ENCODE measurements at regions of chr5 and their contacts with region 1.

Region 1: GRCh38 chr5:176700239-176700847 is 53.1 kb downstream of the TSPAN17 start:
- DNase-seq: peak; percentile 47 to 79
- H3K4me3 ChIP-seq: peak overlapping the region in 1 of 4 experiments; percentile 18; a peak in 1 of 8 replicates
- H3K27ac ChIP-seq: no peak overlapping the region
- H3K4me1 ChIP-seq: peaks cover 13 to 36% (median 25%) of the 10 kb centered on the region in 4 experiments
- H3K27me3 ChIP-seq: no peaks in the 10 kb centered on the region; a peak in 1 of 7 replicates
- CTCF ChIP-seq: peak in 2 of 3 experiments; percentile 76 to 82; a peak in 3 of 4 replicates
- EP300 ChIP-seq: no peak
- POLR2A ChIP-seq: no peak
- RAD21 ChIP-seq: peak; percentile 87 to 93

Region 2: GRCh38 chr5:176180339-176180738 is 520.0 kb before region 1 on chr5:
- CTCF ChIA-PET with region 1: no interaction called
- POLR2A ChIA-PET with region 1: no interaction called
- DNase-seq: no peak
- H3K4me3 ChIP-seq: no peak overlapping the region
- H3K27ac ChIP-seq: no peak overlapping the region
- H3K4me1 ChIP-seq: peaks cover 0 to 4% (median 2%) of the 10 kb centered on the region in 4 experiments; a peak in 1 of 7 replicates
- H3K27me3 ChIP-seq: peaks cover 0 to 2% (median 0%) of the 10 kb centered on the region in 4 experiments; a peak in 2 of 7 replicates
- CTCF ChIP-seq: no peak
- EP300 ChIP-seq: no peak
- POLR2A ChIP-seq: no peak
- RAD21 ChIP-seq: no peak

Region 3: DNA sequence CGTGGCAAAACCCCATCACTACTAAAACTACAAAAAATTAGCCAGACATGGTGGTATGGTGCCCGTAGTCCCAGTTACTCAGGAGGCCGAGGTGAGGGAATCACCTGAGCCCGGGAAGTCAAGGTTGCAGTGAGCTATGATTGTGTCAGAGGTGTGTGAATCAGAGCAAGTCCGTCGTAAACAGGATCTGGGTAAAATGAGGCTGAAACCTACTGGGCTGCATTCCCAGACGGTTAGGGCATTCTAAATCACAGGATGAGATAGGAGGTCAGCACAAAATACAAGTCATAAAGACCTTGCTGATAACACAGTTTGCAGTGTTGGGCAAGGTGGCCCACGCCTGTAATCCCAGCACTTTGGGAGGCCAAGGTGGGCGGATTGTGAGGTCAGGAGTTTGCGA is 282.1 kb before region 1 on chr5:
- CTCF ChIA-PET with region 1: no interaction called
- POLR2A ChIA-PET with region 1: no interaction called
- DNase-seq: no peak
- H3K4me3 ChIP-seq: no peak overlapping the region
- H3K27ac ChIP-seq: no peak overlapping the region
- H3K4me1 ChIP-seq: peaks cover 0 to 3% (median 0%) of the 10 kb centered on the region in 4 experiments; a peak in 4 of 7 replicates
- H3K27me3 ChIP-seq: peaks cover 0 to 11% (median 9%) of the 10 kb centered on the region in 4 experiments; a peak in 6 of 7 replicates
- CTCF ChIP-seq: no peak
- EP300 ChIP-seq: no peak
- POLR2A ChIP-seq: no peak
- RAD21 ChIP-seq: no peak

Region 4: DNA sequence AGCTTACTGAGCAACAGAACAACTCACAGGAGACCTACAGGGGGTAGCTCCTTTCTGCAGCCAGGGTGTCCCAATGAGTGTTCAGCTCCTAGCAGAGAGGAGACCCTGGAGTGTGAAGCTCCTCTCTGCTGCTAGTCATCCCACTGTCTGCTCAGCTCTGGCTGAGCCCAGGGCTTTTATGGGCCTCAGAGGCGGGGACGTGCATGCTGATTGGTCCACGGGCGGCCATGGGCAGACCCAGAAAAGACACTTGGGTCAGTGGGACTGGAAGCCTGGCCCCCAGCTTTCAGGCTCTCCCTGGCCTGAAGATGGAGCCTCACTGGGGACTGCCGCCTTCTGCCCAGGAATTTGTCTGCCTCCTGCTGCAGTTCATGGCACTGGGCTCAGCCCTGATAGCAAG is 12.5 kb before region 1 on chr5:
- CTCF ChIA-PET with region 1: interaction called, 859 read pairs
- POLR2A ChIA-PET with region 1: interaction called, 14 read pairs
- DNase-seq: peak in 1 of 2 experiments; percentile 21
- H3K4me3 ChIP-seq: no peak overlapping the region
- H3K27ac ChIP-seq: no peak overlapping the region
- H3K4me1 ChIP-seq: peaks cover 7 to 17% (median 11%) of the 10 kb centered on the region in 4 experiments; a peak in 6 of 7 replicates
- H3K27me3 ChIP-seq: no peaks in the 10 kb centered on the region
- CTCF ChIP-seq: no peak
- EP300 ChIP-seq: no peak
- POLR2A ChIP-seq: peak in 1 of 2 experiments; percentile 70; a peak in 2 of 3 replicates
- RAD21 ChIP-seq: no peak

Region 5: GRCh38 chr5:176725521-176726280 is 25.4 kb after region 1 on chr5:
- CTCF ChIA-PET with region 1: interaction called, 10 read pairs
- POLR2A ChIA-PET with region 1: no interaction called
- DNase-seq: peak in 1 of 2 experiments; percentile 57
- H3K4me3 ChIP-seq: no peak overlapping the region
- H3K27ac ChIP-seq: no peak overlapping the region
- H3K4me1 ChIP-seq: peaks cover 0 to 24% (median 10%) of the 10 kb centered on the region in 4 experiments; a peak in 5 of 7 replicates
- H3K27me3 ChIP-seq: peaks cover 0 to 6% (median 4%) of the 10 kb centered on the region in 4 experiments; a peak in 3 of 7 replicates
- CTCF ChIP-seq: no peak
- EP300 ChIP-seq: no peak
- POLR2A ChIP-seq: no peak
- RAD21 ChIP-seq: no peak

Region 6: DNA sequence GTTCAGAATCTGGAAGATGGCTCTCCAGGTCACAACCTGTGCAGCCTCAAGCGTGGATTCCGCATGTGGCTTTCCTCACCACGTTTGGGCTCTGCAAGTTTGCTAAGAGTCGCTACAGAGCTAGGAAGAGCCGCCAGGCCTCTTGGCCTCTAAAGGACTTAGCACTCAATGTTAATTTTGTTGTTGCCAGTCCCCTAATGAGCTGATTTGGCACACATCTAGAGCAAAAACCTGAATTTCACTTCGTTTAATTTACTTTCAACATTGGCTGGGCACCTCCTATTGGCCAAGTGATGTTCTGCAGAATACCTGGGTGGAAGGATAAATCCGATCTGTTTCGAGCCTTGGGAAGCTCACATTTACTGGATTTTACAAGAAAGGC is 44.2 kb after region 1 on chr5:
- CTCF ChIA-PET with region 1: interaction called, 54 read pairs
- POLR2A ChIA-PET with region 1: interaction called, 3 read pairs
- DNase-seq: no peak
- H3K4me3 ChIP-seq: peak overlapping the region in 3 of 4 experiments; percentile 3 to 61 (median 3); a peak in 2 of 8 replicates
- H3K27ac ChIP-seq: no peak overlapping the region
- H3K4me1 ChIP-seq: peaks cover 7 to 33% (median 28%) of the 10 kb centered on the region in 4 experiments
- H3K27me3 ChIP-seq: peaks cover 0 to 23% (median 8%) of the 10 kb centered on the region in 4 experiments; a peak in 6 of 7 replicates
- CTCF ChIP-seq: peak in 2 of 3 experiments; percentile 49 to 70; a peak in 3 of 4 replicates
- EP300 ChIP-seq: no peak
- POLR2A ChIP-seq: no peak
- RAD21 ChIP-seq: peak; percentile 46 to 57

Region 7: DNA sequence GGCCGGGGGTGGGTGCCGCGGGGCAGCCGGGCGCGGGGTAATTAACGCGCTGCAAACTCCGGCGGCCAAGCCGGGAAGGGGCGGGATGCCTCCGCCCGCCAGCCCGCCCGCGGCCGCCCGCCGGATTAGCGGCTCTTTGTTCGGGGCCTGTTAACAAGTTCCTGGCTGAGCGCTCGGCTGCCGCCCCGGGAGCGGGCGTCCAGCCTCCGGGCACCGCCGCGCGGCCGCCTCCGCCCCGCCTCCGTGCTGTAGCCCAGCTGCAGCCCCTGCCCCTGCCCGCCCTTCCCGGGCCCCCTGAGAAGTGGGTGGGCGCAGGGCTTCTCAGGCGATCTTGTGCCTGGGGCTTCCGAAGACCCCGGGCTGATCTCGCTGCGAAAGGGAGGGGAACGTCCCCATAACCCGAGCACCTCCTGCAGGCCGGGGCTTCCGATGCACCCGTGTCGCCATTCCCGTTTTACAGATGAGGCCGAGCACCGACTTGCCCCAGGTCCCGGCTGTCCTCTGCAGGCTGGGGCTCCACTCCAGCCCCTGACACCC is 117.6 kb after region 1 on chr5:
- CTCF ChIA-PET with region 1: interaction called, 26 read pairs
- POLR2A ChIA-PET with region 1: no interaction called
- DNase-seq: peak in 1 of 2 experiments; percentile 79
- H3K4me3 ChIP-seq: peak overlapping the region; percentile 28 to 66 (median 48)
- H3K27ac ChIP-seq: no peak overlapping the region
- H3K4me1 ChIP-seq: peaks cover 4 to 42% (median 19%) of the 10 kb centered on the region in 4 experiments
- H3K27me3 ChIP-seq: peaks cover 0 to 7% (median 4%) of the 10 kb centered on the region in 4 experiments; a peak in 2 of 7 replicates
- CTCF ChIP-seq: peak in 2 of 3 experiments; percentile 58 to 75; a peak in 3 of 4 replicates
- EP300 ChIP-seq: no peak
- POLR2A ChIP-seq: no peak
- RAD21 ChIP-seq: peak; percentile 51 to 63

Measured in H1 (cell line).